ENCODE measurements at regions of chr13 and their contacts with region 1.

Region 1: DNA sequence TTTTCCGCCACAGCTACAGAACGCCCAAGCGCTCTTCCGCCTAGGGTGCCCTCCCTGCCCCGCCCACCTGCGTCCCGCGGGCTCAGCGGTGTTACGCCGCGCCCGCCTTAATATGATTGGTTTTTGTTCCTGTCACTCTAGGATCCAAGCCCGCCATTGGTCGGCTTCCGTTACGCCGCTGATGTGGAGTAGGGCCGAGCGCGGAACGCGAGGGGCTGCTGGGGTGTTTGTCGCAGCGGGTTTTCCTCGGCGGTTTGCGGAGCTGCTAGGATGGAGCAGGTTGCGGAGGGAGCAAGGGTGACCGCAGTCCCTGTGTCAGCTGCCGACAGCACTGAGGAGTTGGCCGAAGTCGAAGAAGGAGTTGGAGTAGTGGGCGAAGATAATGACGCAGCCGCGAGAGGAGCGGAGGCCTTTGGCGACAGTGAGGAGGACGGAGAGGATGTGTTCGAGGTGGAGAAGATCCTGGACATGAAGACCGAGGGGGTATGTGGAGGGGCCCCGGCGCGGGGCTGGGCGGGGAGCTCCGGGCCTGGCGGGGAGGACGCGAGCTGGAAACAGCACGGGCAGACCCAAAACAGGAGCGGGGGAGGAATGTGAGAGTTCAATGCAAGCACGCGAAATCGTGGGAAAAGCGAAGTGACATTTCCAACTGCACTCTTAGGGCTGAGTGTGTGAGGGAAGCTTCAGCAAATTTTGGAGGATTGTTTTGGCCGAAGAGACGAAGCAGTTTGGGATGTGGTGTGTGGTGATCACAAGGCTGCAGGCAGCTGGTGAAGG is at the start of gene MPHOSPH8:
- DNase-seq: peak; percentile 97
- CTCF ChIP-seq: no peak

Region 2: DNA sequence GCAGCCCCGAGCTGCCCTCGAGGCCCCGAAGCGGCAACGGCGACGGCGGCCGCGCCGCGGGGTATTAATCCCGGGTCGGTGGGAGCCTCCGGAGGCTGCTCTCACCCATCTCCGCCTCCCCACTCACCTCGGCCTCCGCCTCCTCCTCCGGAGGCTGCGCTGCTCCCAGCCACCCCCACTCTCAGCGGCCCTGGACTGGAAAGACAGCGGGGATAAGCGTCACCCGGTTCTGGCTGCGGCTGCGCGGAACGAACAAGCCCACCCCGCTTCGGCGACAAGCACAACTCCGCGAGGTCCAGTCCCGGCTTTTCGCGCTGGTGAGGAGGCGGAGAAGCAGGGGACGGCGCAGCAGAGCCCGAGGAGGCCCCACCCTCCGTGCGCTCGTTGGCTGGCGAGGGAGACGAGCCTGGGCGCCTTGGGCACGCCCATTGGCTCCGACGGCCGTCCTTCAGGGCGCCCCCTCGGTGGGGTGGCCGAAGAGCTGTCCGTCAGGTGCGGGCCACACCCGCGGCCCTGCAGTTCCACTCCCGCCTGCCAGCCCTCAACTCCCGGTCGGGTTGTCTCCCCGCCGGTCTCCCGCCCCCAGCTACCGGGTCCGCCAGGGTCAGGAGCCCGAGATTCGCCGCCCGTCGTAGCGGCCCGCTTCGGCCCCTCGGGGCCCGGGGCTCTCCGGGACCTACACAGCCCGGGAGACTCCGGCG is 229.8 kb after region 1 on chr13 and contains the start of gene ZMYM5:
- in situ Hi-C with region 1: loop called (anchors 25 kb)
- DNase-seq: peak; percentile 97
- CTCF ChIP-seq: no peak

Region 3: GRCh38 chr13:20182231-20182846 is 548.7 kb after region 1 on chr13:
- in situ Hi-C with region 1: no loop called
- DNase-seq: peak; percentile 82
- CTCF ChIP-seq: peak; percentile 78

Measured in GM13976 (cell line).